ENCODE measurements at regions of chr17 and their contacts with region 1.

Region 1: GRCh38 chr17:44708401-44709181 is at the start of gene DBF4B:
- DNase-seq: peak; percentile 88
- H3K4me3 Mint-ChIP-seq: no peak within 1 kb of the TSS
- H3K27ac Mint-ChIP-seq: no peak within 1 kb of the TSS
- H3K4me1 Mint-ChIP-seq: peaks cover 5% of the 10 kb centered on the region
- H3K27me3 Mint-ChIP-seq: no peaks in the 10 kb centered on the region
- CTCF ChIP-seq: no peak
- total RNA-seq, gene DBF4B: 13.9 TPM in 2 replicates

Region 2: DNA sequence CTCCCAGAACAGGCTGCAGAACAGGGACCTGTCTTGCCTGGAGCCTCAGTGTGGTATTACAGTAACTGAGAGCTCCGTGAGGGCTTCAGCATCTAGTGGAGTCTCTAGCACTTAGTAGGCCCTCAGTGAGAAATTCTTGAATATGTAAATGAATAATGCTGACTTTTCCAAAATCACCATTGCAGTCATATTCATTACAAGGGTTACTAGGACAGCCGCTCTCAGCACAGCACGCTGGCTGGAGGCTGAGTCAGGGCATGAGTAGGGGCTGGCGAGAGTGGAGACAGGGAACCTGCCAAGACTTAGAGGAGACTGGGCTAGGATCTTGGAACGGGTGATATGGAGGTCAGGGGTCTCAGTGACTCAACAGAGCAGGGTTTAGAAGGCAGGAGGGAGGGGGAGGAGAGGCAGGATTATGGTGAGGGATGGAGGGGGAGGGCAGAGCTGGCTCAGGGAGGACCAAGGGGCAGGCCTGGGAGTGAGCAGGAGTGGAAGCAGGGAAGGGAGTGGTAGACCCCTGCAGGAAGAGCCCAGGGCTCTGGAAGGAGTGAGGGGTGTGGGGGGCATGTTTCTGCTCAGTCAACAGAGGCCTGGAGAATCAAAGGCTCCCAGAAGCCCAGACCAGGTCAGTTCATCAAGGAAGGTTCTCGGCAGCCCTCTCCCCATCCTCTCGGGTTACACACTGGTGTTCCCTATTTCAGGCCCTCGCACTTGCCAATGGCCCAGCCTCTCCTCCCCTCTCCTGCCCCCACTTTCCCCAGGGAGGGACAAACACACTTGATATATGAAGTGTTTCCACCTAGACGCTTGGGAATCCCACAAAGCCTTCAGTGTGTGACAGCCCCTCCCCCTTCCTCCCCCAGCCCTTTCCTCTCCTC is 109.1 kb before region 1 on chr17:
- CTCF ChIA-PET with region 1: no interaction called
- POLR2A ChIA-PET with region 1: no interaction called
- intact Hi-C with region 1: no loop called
- DNase-seq: peak; percentile 21
- H3K4me3 Mint-ChIP-seq: no peak overlapping the region
- H3K27ac Mint-ChIP-seq: no peak overlapping the region
- H3K4me1 Mint-ChIP-seq: no peaks in the 10 kb centered on the region
- H3K27me3 Mint-ChIP-seq: no peaks in the 10 kb centered on the region
- CTCF ChIP-seq: no peak

Region 3: GRCh38 chr17:44689477-44690217 is 18.9 kb before region 1 on chr17 and contains the start of gene CCDC43:
- CTCF ChIA-PET with region 1: interaction called, 15 read pairs
- POLR2A ChIA-PET with region 1: interaction called, 53 read pairs
- intact Hi-C with region 1: no loop called
- DNase-seq: peak; percentile 88
- H3K4me3 Mint-ChIP-seq: peak within 1 kb of the TSS; percentile 96
- H3K27ac Mint-ChIP-seq: peak within 1 kb of the TSS; percentile 95
- H3K4me1 Mint-ChIP-seq: peaks cover 21% of the 10 kb centered on the region
- H3K27me3 Mint-ChIP-seq: no peaks in the 10 kb centered on the region
- CTCF ChIP-seq: no peak
- total RNA-seq, gene CCDC43: 32.8 and 33.6 TPM in 2 replicates